AG04450 (cell line): ENCODE measurements at regions of chr2 and their contacts with region 1.

Region 1: GRCh38 chr2:84925724-84926376 is 20.4 kb downstream of the TMSB10 start:
- DNase-seq: no peak
- H3K4me3 ChIP-seq: peak overlapping the region; percentile 57
- H3K27ac ChIP-seq: no peak overlapping the region
- H3K27me3 ChIP-seq: no peaks in the 10 kb centered on the region
- CTCF ChIP-seq: peak; percentile 89

Region 2: DNA sequence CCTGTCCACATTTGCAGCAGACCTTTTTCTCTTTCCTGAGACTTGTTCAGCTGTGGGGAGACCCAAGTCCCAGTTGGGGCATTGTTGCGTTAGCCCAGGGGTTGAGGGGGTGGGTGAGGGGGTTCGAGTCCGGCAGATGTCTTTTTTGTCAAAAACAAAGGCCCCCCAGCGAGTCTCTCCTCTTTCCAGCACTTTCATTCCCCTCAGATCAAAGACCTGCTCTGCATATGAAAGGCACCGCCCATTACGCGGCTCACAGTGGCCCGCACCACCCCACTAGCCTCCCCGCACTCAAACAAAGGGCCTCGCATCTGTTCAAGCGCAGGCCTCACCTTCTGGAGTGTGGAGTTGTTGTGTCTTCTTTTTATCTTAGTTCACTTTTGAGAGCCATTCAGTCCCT is 70.1 kb before region 1 on chr2:
- CTCF ChIA-PET with region 1: no interaction called
- POLR2A ChIA-PET with region 1: no interaction called
- DNase-seq: no peak
- H3K4me3 ChIP-seq: no peak overlapping the region
- H3K27ac ChIP-seq: no peak overlapping the region
- H3K27me3 ChIP-seq: no peaks in the 10 kb centered on the region
- CTCF ChIP-seq: no peak

Region 3: GRCh38 chr2:84881581-84882414 is 44.1 kb before region 1 on chr2:
- CTCF ChIA-PET with region 1: interaction called, 18 read pairs
- POLR2A ChIA-PET with region 1: no interaction called
- DNase-seq: peak; percentile 66
- H3K4me3 ChIP-seq: peak overlapping the region; percentile 76
- H3K27ac ChIP-seq: peak overlapping the region; percentile 58
- H3K27me3 ChIP-seq: no peaks in the 10 kb centered on the region
- CTCF ChIP-seq: peak; percentile 84

Region 4: DNA sequence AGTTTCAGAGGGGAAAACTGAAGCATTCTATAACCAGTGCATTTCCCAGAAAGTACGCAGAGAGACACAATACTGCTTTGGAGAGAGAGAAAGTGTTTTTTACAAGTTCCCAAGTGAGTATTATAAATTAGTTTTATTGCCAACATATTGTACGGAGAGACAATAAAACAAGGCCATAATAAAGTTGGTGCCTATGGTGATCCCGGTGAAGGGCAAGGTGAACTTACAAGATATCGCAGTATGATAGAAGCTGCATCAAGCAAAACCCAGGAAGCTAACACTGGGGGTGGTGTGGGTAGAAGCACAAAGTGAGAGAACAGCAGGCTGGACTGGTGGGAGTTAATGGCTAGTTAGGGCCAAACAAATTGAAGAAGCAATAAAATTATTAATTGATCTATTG is 12.9 kb before region 1 on chr2:
- CTCF ChIA-PET with region 1: interaction called, 23 read pairs
- POLR2A ChIA-PET with region 1: no interaction called
- DNase-seq: no peak
- H3K4me3 ChIP-seq: no peak overlapping the region
- H3K27ac ChIP-seq: no peak overlapping the region
- H3K27me3 ChIP-seq: no peaks in the 10 kb centered on the region
- CTCF ChIP-seq: no peak

Region 5: DNA sequence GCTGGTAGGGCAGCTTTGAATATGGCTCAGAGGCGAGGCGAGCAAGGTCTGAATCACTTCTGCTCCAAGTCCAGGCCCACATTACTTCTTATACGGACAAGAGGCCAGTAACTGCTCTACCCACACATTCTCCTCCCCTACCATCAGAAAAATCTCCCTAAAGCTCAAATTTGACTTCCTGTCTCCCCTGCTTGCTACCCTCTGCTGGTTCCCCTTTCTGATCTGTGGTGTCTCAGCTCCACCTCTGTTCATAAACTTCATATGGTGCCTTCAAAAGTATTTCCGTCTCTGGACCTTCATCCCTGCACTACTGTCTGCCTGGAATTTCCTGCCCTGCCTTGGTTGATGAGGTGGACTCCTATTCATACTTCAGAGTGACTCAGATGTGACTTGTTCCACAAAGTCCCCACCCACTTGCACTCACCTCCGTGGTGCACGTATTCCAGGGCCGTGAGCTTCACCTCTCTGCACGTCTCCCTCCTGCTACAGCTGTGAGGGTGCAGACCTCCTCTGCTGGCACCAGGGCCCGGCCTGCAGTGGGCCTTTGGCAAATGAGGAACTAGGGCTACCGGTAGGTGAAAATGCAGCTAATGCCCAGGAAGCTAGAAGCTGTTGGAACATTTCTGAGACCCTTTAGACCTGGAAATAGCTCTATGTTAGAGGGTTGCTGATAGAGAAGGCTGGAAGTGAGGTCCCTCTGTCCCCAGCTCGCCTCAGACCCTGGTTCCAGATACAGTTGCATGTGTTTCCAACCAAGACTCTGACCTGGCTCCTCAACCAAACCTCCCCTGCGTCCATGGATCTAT is 20.6 kb after region 1 on chr2:
- CTCF ChIA-PET with region 1: interaction called, 28 read pairs
- POLR2A ChIA-PET with region 1: interaction called, 3 read pairs
- DNase-seq: no peak
- H3K4me3 ChIP-seq: no peak overlapping the region
- H3K27ac ChIP-seq: peak overlapping the region; percentile 12
- H3K27me3 ChIP-seq: no peaks in the 10 kb centered on the region
- CTCF ChIP-seq: no peak